Dendritic cell treated with granulocyte-macrophage colony-stimulating factor and Interleukin-4, amounts not matched to agents 40 ng/mL and 50 ng/mL, for 4 days (primary cell): ENCODE measurements at regions of chr19 and their contacts with region 1.

Region 1: GRCh38 chr19:5680437-5681368 is at the starts of genes HSD11B1L and MICOS13:
- H3K4me3 Mint-ChIP-seq: peak within 1 kb of the TSS; percentile 92
- H3K27ac Mint-ChIP-seq: peak within 1 kb of the TSS; percentile 89
- H3K4me1 Mint-ChIP-seq: peaks cover 22% of the 10 kb centered on the region
- H3K27me3 Mint-ChIP-seq: peaks cover 11% of the 10 kb centered on the region

Region 2: GRCh38 chr19:5607318-5608270 is 73.1 kb before region 1 on chr19:
- intact Hi-C with region 1: no loop called
- H3K4me3 Mint-ChIP-seq: no peak overlapping the region
- H3K27ac Mint-ChIP-seq: no peak overlapping the region
- H3K4me1 Mint-ChIP-seq: no peaks in the 10 kb centered on the region
- H3K27me3 Mint-ChIP-seq: no peaks in the 10 kb centered on the region

Region 3: GRCh38 chr19:5622463-5623396 is 58.0 kb before region 1 on chr19 and contains the starts of genes SAFB and SAFB2:
- intact Hi-C with region 1: loop called (anchors 2 kb)
- H3K4me3 Mint-ChIP-seq: peak within 1 kb of the TSS; percentile 100
- H3K27ac Mint-ChIP-seq: peak within 1 kb of the TSS; percentile 100
- H3K4me1 Mint-ChIP-seq: peaks cover 61% of the 10 kb centered on the region
- H3K27me3 Mint-ChIP-seq: no peaks in the 10 kb centered on the region

Region 4: GRCh38 chr19:5665796-5666513 is 14.7 kb before region 1 on chr19:
- intact Hi-C with region 1: no loop called
- H3K4me3 Mint-ChIP-seq: no peak overlapping the region
- H3K27ac Mint-ChIP-seq: no peak overlapping the region
- H3K4me1 Mint-ChIP-seq: no peaks in the 10 kb centered on the region
- H3K27me3 Mint-ChIP-seq: no peaks in the 10 kb centered on the region

Region 5: GRCh38 chr19:5719961-5720790 is 39.5 kb after region 1 on chr19 and contains the starts of genes CATSPERD and LONP1:
- intact Hi-C with region 1: loop called (anchors 1 kb)
- H3K4me3 Mint-ChIP-seq: peak within 1 kb of the TSS; percentile 85
- H3K27ac Mint-ChIP-seq: peak within 1 kb of the TSS; percentile 93
- H3K4me1 Mint-ChIP-seq: peaks cover 29% of the 10 kb centered on the region
- H3K27me3 Mint-ChIP-seq: peaks cover 2% of the 10 kb centered on the region